Activated CD8-positive, alpha-beta T cell treated with anti-CD3 and anti-CD28 coated beads for 36 hours (primary cell): ENCODE measurements at regions of chr11 and their contacts with region 1.

Region 1: DNA sequence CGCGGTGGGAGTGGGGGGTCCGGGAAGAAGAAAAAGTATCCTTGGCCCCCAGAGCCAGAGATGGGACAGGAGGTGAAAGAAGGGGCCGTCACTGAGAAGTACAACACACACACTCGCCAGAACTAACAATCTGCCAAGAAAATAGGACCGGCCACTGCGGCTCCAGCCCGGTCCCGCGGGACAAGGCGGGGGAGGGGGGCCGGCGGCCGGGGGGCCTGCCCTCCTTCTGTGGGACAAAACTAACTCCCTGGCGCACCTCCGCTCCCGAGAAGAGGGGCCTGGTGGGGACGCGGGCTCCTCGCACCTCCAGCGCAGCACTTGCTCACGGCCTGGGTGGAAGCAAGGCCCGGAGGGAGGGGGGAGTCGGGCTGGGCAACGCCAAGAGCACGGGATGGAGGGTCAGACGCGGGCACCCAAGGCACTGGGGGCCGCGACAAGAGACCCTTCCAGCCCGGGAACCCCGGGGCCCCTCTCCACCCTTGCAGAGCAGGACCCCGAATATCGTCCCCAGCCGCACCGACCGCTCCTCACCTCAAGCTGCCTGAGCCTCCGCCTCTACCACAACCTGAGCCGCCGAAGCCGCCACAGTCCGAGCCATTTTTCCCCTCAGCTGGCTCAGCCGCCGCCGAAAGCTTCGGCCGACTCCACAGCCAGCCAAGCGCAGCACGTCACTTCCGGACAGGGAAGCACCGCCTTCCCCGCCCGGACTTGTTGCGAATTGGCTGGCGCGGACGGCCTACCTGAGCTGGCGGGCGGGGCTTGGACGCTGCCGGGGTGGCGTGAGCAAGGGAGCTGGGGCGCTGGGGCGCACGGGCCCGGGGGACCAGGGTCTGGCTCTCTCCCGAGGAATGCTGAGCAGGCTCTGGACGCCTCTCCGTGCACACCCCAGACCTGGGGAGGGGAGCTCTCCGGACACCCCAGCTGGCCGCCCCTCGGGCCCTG is at the start of gene PIK3C2A:
- DNase-seq: peak; percentile 98
- ATAC-seq: peak; percentile 97
- H3K4me3 Mint-ChIP-seq: peak within 1 kb of the TSS; percentile 82
- H3K27ac Mint-ChIP-seq: peak within 1 kb of the TSS; percentile 98
- H3K4me1 Mint-ChIP-seq: peaks cover 43% of the 10 kb centered on the region
- H3K27me3 Mint-ChIP-seq: no peaks in the 10 kb centered on the region
- CTCF ChIP-seq: no peak
- total RNA-seq, gene PIK3C2A: 24.1 to 29.3 TPM

Region 2: DNA sequence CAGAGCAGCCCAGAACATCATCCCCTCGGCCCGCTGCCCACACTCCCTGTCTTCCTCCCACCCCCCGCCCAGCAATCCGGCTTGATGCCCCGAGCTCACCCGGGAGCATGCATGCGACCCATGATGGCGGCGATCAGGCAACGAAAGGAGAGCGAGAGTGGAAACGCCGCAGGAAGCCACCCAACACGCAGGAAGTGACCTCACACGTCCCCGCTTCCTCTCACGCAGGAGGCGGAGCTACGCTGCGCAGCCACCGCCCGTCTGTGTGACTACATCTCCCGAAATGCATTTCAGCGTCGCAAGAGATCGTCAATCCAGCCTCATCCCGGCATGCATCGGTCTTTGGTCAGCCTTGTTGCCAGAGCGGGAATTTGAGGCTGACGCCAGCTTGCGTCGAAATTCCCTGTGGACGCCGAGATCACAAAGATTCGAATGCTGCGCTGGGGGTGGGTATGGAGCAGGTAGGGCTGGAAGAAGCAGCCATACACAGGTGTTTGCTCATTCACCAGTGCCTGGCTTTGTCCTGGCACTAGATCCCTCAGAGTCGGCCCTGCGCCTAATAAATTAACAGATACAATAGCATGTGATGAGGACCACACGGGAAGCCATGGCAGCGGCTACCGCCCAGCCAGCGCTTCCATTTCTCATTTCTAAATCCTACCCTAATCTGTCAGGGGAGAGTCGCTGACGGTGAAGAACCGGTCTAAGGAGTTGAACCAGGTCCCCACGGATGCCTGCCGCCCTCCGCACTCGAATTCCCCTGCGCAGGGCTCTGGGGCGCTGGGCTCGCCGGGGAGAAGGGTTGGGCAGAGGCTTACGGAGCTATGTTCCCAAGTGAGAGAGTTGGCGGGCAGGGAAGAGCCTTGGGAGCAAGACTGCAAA is 129.8 kb before region 1 on chr11 and contains the start of gene RPS13:
- CTCF ChIA-PET with region 1: interaction called, 3 read pairs
- POLR2A ChIA-PET with region 1: interaction called, 4 read pairs
- intact Hi-C with region 1: loop called (anchors 10 kb)
- DNase-seq: peak; percentile 97
- ATAC-seq: peak; percentile 98
- H3K4me3 Mint-ChIP-seq: peak within 1 kb of the TSS; percentile 97
- H3K27ac Mint-ChIP-seq: peak within 1 kb of the TSS; percentile 98
- H3K4me1 Mint-ChIP-seq: peaks cover 33% of the 10 kb centered on the region
- H3K27me3 Mint-ChIP-seq: no peaks in the 10 kb centered on the region
- CTCF ChIP-seq: no peak
- total RNA-seq, gene RPS13: 1,728 to 1,739 TPM

Region 3: DNA sequence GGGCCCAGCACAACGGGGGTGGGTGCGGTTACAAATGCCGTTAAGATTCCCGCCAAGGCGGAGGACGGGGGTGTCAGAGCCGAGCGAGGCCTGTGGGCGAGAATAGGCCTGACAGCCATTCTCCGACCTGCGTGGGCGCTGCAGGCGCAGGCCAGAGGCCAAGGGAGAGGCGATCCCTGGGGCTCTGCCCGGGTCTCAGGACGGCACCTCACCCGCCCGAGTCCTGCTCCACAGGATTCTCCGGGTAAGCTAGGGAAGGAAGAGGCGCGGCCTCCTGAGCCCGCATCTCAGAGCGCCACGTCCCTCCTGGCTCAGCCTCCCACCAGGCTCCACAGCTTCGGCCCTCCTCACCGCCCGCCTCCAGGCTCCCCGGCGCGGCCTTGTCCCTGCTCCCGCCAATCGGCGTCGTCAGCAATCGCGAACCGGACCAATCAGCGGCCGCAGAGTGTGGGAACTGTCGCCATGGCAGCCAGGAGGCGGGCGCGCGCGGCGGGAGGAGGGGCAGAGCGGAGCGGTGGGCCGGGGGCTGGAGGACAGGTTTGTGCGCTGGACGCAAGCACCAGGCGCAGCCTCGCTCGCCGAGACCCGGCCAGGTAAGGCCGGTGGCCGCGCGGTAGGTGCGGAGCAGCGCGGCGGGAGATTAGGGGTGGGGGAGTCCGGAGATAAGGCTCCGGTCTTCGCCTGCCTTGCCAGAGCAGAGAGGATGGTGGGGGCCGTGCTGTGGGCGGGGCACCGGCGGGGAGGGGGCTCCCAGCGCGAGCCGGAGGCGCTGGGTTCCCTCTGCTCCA is 68.8 kb after region 1 on chr11 and contains the start of gene NUCB2:
- CTCF ChIA-PET with region 1: no interaction called
- POLR2A ChIA-PET with region 1: interaction called, 12 read pairs
- intact Hi-C with region 1: no loop called
- DNase-seq: peak; percentile 97
- ATAC-seq: peak; percentile 88
- H3K4me3 Mint-ChIP-seq: peak within 1 kb of the TSS; percentile 82
- H3K27ac Mint-ChIP-seq: peak within 1 kb of the TSS; percentile 91
- H3K4me1 Mint-ChIP-seq: peaks cover 36% of the 10 kb centered on the region
- H3K27me3 Mint-ChIP-seq: no peaks in the 10 kb centered on the region
- CTCF ChIP-seq: no peak
- total RNA-seq, gene NUCB2: 81.9 to 86.0 TPM

Region 4: GRCh38 chr11:17439316-17439782 is 231.8 kb after region 1 on chr11:
- CTCF ChIA-PET with region 1: no interaction called
- POLR2A ChIA-PET with region 1: no interaction called
- intact Hi-C with region 1: no loop called
- DNase-seq: peak; percentile 7
- ATAC-seq: peak; percentile 49
- H3K4me3 Mint-ChIP-seq: no peak overlapping the region
- H3K27ac Mint-ChIP-seq: no peak overlapping the region
- H3K4me1 Mint-ChIP-seq: peaks cover 9% of the 10 kb centered on the region
- H3K27me3 Mint-ChIP-seq: peaks cover 13% of the 10 kb centered on the region
- CTCF ChIP-seq: no peak